ENCODE measurements at regions of chr14 and their contacts with region 1.

Region 1: GRCh38 chr14:93206793-93207467 is at the starts of genes GON7 and UBR7:
- DNase-seq: peak; percentile 95
- H3K4me3 Mint-ChIP-seq: peak within 1 kb of the TSS; percentile 92
- H3K27ac Mint-ChIP-seq: peak within 1 kb of the TSS; percentile 83
- H3K4me1 Mint-ChIP-seq: peaks cover 32% of the 10 kb centered on the region
- H3K27me3 Mint-ChIP-seq: no peaks in the 10 kb centered on the region
- total RNA-seq, gene GON7: 4.8 to 7.0 TPM
- total RNA-seq, gene UBR7: 43.0 to 45.0 TPM

Region 2: DNA sequence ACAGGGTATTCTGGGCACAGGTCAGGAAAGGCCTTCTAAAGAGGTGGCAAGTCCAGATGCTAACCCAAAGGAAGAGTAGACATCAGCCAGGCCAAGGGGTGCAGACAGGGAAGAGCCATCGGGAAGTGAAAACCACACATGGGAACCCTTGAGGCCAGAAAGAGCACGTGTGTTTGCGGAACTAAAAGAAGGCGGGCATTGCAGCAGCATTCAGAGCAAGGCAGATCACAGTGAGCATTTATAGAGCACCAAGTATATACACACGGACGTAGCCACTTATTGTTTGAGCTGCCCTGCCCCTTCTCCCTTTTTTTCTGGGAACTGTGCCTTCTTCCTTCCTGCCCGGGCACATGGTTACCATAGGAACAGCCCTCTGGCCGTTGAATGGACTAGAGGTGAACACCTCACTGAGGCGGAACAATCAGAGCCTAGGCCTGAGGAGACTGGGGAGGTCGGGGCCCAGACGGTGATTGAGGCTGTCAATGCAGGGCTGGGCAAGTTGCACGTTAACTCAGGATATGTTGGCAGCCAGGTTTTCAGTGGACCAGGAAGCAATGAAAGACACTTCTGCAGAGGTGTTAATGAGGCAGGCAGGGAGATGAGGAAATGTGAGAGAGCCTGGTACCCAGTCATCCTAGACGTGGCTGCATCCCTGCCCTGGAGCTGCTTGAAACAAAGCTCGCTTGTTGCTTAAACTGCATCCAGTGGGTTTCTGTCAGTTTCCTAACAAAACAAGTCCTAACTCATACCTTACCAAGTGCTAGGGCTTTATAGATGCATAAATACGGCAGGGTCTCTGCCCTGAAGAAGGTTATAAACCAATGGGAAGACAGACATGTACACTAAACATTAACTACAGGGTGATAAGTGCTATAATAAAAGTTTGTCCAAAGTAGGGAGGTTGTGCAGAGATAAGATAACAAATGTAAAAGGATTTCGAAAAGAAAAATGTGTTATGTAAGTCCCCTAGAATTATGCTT is 56.4 kb before region 1 on chr14:
- CTCF ChIA-PET with region 1: no interaction called
- intact Hi-C with region 1: no loop called
- DNase-seq: no peak
- H3K4me3 Mint-ChIP-seq: no peak overlapping the region
- H3K27ac Mint-ChIP-seq: no peak overlapping the region
- H3K4me1 Mint-ChIP-seq: peaks cover 7% of the 10 kb centered on the region
- H3K27me3 Mint-ChIP-seq: no peaks in the 10 kb centered on the region

Region 3: GRCh38 chr14:93171376-93171775 is 35.6 kb before region 1 on chr14:
- CTCF ChIA-PET with region 1: no interaction called
- intact Hi-C with region 1: no loop called
- DNase-seq: no peak
- H3K4me3 Mint-ChIP-seq: no peak overlapping the region
- H3K27ac Mint-ChIP-seq: no peak overlapping the region
- H3K4me1 Mint-ChIP-seq: no peaks in the 10 kb centered on the region
- H3K27me3 Mint-ChIP-seq: no peaks in the 10 kb centered on the region

Region 4: GRCh38 chr14:93184388-93185353 is 22.3 kb before region 1 on chr14 and contains the starts of genes LYSET and MOAP1:
- CTCF ChIA-PET with region 1: interaction called, 8 read pairs
- intact Hi-C with region 1: loop called (anchors 1 kb)
- DNase-seq: peak; percentile 91
- H3K4me3 Mint-ChIP-seq: peak within 1 kb of the TSS; percentile 88
- H3K27ac Mint-ChIP-seq: peak within 1 kb of the TSS; percentile 91
- H3K4me1 Mint-ChIP-seq: peaks cover 42% of the 10 kb centered on the region
- H3K27me3 Mint-ChIP-seq: no peaks in the 10 kb centered on the region
- total RNA-seq, gene LYSET: 11.4 to 11.6 TPM
- total RNA-seq, gene MOAP1: 11.9 to 13.1 TPM

Region 5: DNA sequence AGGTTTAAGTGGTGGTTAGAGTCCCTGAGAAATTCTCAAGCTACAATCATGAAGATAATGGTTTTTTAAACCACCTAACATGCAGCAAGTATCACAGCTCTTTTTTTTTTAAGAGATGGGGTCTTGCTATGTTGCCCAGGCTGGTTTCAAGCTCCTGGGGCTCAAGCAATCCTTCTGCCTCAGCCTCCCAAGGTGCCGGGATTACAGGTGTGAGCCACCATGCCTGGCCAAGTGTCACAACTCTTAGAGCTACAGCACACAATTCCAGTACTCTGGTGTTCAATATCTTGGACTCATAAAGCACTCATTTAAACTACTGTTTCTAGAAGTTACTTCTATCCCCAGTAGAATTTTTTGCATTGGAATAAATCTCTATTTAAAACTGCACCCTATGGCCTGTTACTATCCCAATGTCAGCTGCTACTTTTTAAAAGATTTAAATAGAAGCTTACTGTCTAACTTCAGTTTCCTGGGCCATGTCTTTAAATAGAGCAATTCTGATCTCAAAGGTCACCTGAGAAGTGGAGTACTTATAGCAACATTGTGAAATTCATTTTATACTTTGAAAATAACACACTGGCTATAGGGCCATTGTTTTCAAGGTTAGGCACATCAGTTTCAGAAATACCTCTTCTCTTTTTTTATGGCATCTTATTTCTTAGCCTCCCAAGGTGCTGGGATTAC is 11.5 kb before region 1 on chr14:
- CTCF ChIA-PET with region 1: interaction called, 11 read pairs
- intact Hi-C with region 1: no loop called
- DNase-seq: no peak
- H3K4me3 Mint-ChIP-seq: no peak overlapping the region
- H3K27ac Mint-ChIP-seq: no peak overlapping the region
- H3K4me1 Mint-ChIP-seq: no peaks in the 10 kb centered on the region
- H3K27me3 Mint-ChIP-seq: no peaks in the 10 kb centered on the region

Region 6: DNA sequence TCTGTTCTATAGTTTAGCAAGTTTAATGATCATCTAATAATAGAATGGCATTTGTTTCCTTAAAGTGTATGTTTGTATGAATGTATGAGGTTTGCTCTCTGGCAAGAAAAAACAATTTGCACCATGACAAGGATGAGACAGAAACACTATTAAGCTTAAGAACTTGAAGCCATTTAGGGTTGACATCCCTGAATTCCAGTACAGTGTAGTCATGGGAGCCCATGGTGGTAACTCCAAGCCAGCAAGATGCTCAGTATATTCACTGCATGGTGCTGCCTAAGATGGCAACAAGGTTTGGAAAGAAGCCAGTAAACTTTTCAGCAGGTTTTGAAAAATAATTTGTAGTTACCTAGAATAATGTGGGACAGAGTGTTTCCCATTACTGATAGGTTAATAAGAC is 422.7 kb after region 1 on chr14:
- CTCF ChIA-PET with region 1: no interaction called
- intact Hi-C with region 1: no loop called
- DNase-seq: no peak
- H3K4me3 Mint-ChIP-seq: no peak overlapping the region
- H3K27ac Mint-ChIP-seq: no peak overlapping the region
- H3K4me1 Mint-ChIP-seq: no peaks in the 10 kb centered on the region
- H3K27me3 Mint-ChIP-seq: peaks cover 23% of the 10 kb centered on the region